Activated CD8-positive, alpha-beta T cell treated with anti-CD3 and anti-CD28 coated beads for 36 hours (primary cell): ENCODE measurements at regions of chr1 and their contacts with region 1.

Region 1: GRCh38 chr1:84753516-84754385 is 63.5 kb upstream of the SSX2IP start:
- DNase-seq: peak; percentile 78
- ATAC-seq: peak; percentile 93
- H3K4me3 Mint-ChIP-seq: no peak overlapping the region
- H3K27ac Mint-ChIP-seq: no peak overlapping the region
- H3K4me1 Mint-ChIP-seq: peaks cover 8% of the 10 kb centered on the region
- H3K27me3 Mint-ChIP-seq: peaks cover 6% of the 10 kb centered on the region
- CTCF ChIP-seq: peak; percentile 98

Region 2: GRCh38 chr1:84433258-84434080 is 320.3 kb before region 1 on chr1:
- CTCF ChIA-PET with region 1: interaction called, 14 read pairs
- POLR2A ChIA-PET with region 1: no interaction called
- intact Hi-C with region 1: loop called (anchors 2 kb)
- DNase-seq: peak; percentile 72
- ATAC-seq: peak; percentile 76
- H3K4me3 Mint-ChIP-seq: peak overlapping the region; percentile 64
- H3K27ac Mint-ChIP-seq: peak overlapping the region; percentile 45
- H3K4me1 Mint-ChIP-seq: peaks cover 7% of the 10 kb centered on the region
- H3K27me3 Mint-ChIP-seq: no peaks in the 10 kb centered on the region
- CTCF ChIP-seq: peak; percentile 73

Region 3: DNA sequence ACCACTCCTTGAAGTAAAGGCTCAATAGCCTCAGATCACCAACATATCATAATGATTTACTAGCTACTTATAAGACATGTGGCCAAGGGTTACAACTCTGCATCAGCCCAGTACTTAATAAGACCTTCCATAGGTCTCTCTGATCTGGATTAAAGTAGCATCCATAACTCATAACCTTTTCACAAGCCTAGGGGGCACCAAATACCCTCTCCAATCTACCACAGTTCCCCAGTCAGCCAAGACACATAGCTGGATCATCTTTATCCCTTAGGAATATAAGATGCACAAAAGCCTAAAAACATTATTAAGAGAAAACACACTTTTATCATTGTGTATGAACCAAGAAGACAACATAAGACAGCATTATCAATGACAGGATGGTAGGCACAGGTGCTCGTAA is 85.6 kb before region 1 on chr1:
- CTCF ChIA-PET with region 1: interaction called, 5 read pairs
- POLR2A ChIA-PET with region 1: no interaction called
- intact Hi-C with region 1: loop called (anchors 2 kb)
- DNase-seq: no peak
- ATAC-seq: peak; percentile 42
- H3K4me3 Mint-ChIP-seq: no peak overlapping the region
- H3K27ac Mint-ChIP-seq: no peak overlapping the region
- H3K4me1 Mint-ChIP-seq: peaks cover 6% of the 10 kb centered on the region
- H3K27me3 Mint-ChIP-seq: no peaks in the 10 kb centered on the region
- CTCF ChIP-seq: peak; percentile 15

Region 4: GRCh38 chr1:84763912-84764663 is 10.3 kb after region 1 on chr1:
- CTCF ChIA-PET with region 1: interaction called, 12 read pairs
- POLR2A ChIA-PET with region 1: no interaction called
- intact Hi-C with region 1: no loop called
- DNase-seq: no peak
- ATAC-seq: no peak
- H3K4me3 Mint-ChIP-seq: no peak overlapping the region
- H3K27ac Mint-ChIP-seq: no peak overlapping the region
- H3K4me1 Mint-ChIP-seq: peaks cover 3% of the 10 kb centered on the region
- H3K27me3 Mint-ChIP-seq: peaks cover 13% of the 10 kb centered on the region
- CTCF ChIP-seq: no peak

Region 5: DNA sequence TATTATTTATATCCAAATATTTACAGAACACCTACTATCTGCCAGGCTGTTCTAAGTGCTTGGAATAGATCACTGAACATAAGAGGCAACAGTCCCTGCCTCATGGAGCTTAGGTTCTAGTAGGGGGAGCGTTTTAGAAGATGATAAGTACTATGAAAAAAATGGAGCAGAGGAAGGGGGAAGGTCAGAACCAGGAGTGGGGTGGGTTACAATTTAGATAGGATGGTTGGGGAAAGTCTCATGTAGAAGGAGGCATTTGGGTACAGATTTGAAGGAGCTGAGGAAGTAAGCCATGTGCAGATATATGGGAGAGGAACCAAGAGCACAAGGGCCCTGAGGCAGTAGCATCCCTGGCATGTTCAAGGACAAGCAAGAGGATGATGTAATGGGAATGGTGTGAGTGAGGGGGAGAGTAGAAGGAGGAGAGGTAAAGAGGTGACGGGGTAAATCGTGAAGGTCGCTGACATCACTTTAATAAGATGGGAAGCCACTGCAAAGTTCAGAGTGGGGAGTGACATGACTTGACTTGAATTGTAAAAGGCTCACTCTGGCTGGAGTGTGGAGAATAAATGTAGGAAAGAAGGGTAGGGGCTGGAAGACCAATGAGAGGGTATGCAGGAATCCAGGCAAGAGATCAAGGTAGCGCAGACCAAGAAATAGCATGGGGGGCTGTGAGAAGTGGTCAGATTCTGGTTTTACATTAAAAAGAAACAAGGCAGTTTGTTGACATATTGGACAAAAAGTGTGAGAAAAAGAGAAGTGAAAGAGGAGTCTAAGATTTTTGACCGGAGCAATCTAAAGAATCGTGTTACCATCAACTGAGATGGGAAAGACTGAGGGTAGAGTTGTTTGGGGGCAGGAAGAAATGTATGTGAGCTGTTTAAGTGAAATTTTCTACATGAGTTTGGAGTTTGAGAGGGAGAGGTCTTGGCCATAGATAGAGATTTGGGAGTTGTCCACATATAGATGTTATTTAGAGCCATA is 46.6 kb after region 1 on chr1:
- CTCF ChIA-PET with region 1: no interaction called
- POLR2A ChIA-PET with region 1: no interaction called
- intact Hi-C with region 1: no loop called
- DNase-seq: no peak
- ATAC-seq: no peak
- H3K4me3 Mint-ChIP-seq: no peak overlapping the region
- H3K27ac Mint-ChIP-seq: no peak overlapping the region
- H3K4me1 Mint-ChIP-seq: no peaks in the 10 kb centered on the region
- H3K27me3 Mint-ChIP-seq: peaks cover 2% of the 10 kb centered on the region
- CTCF ChIP-seq: no peak